ENCODE measurements at regions of chr1 and their contacts with region 1.

Region 1: DNA sequence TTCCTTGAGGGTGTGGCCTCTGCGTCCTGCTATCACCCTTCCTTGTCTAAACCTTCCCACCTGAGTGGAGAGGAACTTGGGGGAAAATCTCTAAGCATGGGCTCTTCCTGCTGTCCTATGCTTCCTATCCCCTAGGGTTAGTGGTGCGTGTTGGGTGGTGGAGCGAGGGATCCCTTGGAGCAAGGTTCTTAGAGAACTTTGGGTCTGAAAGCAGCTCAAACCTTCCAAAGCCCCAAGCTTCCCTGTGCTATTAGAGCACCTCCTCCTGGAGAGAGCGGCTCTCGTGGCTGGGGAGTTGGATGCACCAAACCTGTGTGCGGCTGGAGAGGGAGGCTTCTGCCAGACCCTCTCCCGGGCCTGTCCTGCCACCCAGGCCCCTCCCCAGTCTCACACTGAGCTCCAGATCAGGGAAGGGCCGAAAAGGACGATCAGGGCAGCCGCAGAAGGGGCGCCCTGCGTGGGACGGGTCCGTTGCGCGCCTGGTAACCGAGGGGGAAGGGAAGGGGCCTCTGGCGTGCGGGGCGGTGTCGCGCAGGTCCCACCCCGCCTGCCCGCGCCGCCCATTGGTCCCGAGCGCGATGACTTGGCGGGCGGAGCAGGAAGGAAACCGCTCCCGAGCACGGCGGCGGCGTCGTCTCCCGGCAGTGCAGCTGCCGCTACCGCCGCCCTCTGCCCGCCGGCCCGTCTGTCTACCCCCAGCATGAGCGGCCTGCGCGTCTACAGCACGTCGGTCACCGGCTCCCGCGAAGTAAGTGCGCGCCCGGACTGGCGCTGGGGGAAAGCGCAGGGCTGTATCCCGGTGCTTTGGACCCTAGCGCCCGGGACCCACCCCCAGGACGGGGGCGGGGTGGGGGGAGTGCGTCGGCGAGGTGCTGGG is at the start of gene SH3BGRL3:
- DNase-seq: peak; percentile 79 to 87 (median 85)
- H3K4me3 ChIP-seq: peak within 1 kb of the TSS; percentile 70 to 86 (median 75)
- H3K27ac ChIP-seq: peak within 1 kb of the TSS; percentile 89 to 93
- H3K4me1 ChIP-seq: peaks cover 30 to 99% (median 97%) of the 10 kb centered on the region in 4 experiments
- H3K27me3 ChIP-seq: no peaks in the 10 kb centered on the region

Region 2: GRCh38 chr1:25997828-25998761 is 281.6 kb before region 1 on chr1 and contains the start of gene PAFAH2:
- CTCF ChIA-PET with region 1: no interaction called
- POLR2A ChIA-PET with region 1: no interaction called
- DNase-seq: peak; percentile 100
- H3K4me3 ChIP-seq: peak within 1 kb of the TSS; percentile 11 to 92 (median 72)
- H3K27ac ChIP-seq: peak within 1 kb of the TSS; percentile 71 to 92
- H3K4me1 ChIP-seq: peaks cover 0 to 27% (median 16%) of the 10 kb centered on the region in 4 experiments
- H3K27me3 ChIP-seq: no peaks in the 10 kb centered on the region

Region 3: GRCh38 chr1:26265405-26265804 is 14.3 kb before region 1 on chr1:
- CTCF ChIA-PET with region 1: interaction called, 16 read pairs
- POLR2A ChIA-PET with region 1: interaction called, 4 read pairs
- DNase-seq: no peak
- H3K4me3 ChIP-seq: no peak overlapping the region
- H3K27ac ChIP-seq: peak overlapping the region in 1 of 2 experiments; percentile 19
- H3K4me1 ChIP-seq: no peaks in the 10 kb centered on the region
- H3K27me3 ChIP-seq: no peaks in the 10 kb centered on the region

Region 4: GRCh38 chr1:26306290-26307229 is 26.9 kb after region 1 on chr1 and contains the start of gene UBXN11:
- CTCF ChIA-PET with region 1: interaction called, 12 read pairs
- POLR2A ChIA-PET with region 1: interaction called, 3 read pairs
- DNase-seq: peak; percentile 94 to 97 (median 96)
- H3K4me3 ChIP-seq: peak within 1 kb of the TSS; percentile 69 to 98 (median 90)
- H3K27ac ChIP-seq: peak within 1 kb of the TSS; percentile 75 to 91
- H3K4me1 ChIP-seq: peaks cover 14 to 33% (median 26%) of the 10 kb centered on the region in 4 experiments
- H3K27me3 ChIP-seq: no peaks in the 10 kb centered on the region

Region 5: DNA sequence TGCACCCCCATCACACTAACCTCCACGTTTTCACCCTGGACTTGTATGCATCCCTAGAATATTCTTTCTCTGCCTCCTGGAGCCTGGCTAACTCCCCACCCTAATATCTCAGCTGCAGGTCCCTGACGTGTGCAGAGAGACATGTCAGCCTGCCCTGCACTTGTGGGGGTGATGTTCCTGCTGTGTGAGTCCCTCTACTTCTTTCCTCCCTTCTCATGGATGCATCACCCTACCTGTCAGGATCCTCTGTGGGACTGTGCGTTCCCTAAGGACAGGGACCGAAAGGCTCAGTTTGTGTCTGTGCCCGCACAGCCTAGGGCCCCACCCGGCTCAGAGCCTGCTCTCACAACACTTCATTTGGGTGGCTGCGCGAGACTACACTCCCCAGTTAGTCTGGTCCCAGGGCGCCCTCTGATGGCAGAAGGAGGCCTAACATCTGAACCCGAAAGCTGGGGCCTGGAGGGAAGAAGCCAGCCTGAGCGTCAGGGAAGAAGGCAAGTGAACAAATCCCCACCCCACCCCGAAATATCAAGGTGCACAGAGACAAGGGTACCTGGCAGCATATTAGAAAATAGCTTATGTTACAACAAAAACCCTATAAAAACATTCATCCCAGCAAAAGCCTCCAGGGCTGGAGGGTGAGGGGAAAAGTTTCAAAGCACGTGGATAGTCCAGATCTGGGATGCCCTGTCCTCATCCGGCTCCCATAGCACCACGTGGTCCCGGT is 41.8 kb after region 1 on chr1:
- CTCF ChIA-PET with region 1: interaction called, 161 read pairs
- POLR2A ChIA-PET with region 1: interaction called, 13 read pairs
- DNase-seq: peak; percentile 87 to 92 (median 88)
- H3K4me3 ChIP-seq: peak overlapping the region in 1 of 7 experiments; percentile 11
- H3K27ac ChIP-seq: peak overlapping the region in 1 of 2 experiments; percentile 9
- H3K4me1 ChIP-seq: peaks cover 6 to 52% (median 47%) of the 10 kb centered on the region in 4 experiments
- H3K27me3 ChIP-seq: no peaks in the 10 kb centered on the region

Region 6: DNA sequence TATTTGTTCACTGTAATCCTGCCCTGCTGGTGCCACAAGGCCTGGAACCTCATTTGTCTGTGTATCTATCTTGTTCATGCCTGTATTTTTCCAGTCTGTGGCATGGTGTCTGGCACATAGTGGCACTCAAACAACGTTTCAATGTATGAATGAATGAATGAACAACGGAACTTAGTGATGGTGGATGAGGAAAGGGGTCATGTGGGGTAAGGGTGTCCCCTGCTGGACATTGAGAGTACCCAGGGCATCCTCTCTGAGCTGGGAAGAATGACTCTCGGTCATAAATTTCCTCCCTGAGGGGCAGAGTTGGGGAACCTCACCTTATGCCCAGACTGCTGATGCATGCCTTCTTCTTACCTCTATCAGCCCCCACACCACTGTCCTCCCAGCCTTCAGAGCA is 111.8 kb after region 1 on chr1:
- CTCF ChIA-PET with region 1: interaction called, 11 read pairs
- POLR2A ChIA-PET with region 1: interaction called, 3 read pairs
- DNase-seq: peak; percentile 60 to 84 (median 79)
- H3K4me3 ChIP-seq: no peak overlapping the region
- H3K27ac ChIP-seq: no peak overlapping the region
- H3K4me1 ChIP-seq: peaks cover 0 to 29% (median 0%) of the 10 kb centered on the region in 4 experiments
- H3K27me3 ChIP-seq: no peaks in the 10 kb centered on the region